ENCODE measurements at regions of chr21 and their contacts with region 1.

Region 1: DNA sequence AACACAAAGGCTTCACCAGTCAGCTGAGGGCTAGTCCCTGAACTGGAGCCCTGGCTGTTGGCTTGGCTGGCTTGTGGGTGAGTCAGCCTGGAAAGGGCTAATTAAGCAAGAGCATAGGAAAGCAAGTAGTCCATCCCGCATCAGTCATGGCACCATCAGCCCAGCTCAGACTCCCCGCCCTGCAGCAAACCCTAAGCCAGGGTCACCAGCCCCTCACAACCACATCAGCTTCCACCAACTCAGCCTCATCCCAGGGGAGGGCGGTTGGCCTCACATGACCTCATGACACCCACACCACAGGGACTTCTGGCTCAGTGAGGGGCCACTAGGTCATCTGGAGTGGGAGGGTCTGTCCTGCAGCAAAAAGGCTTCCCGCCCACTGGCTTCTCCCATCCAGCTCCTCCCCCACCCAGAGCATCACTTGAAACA is 7.0 kb upstream of the SPATC1L start:
- DNase-seq: peak; percentile 26
- H3K4me3 ChIP-seq: no peak overlapping the region
- CTCF ChIP-seq: no peak

Region 2: DNA sequence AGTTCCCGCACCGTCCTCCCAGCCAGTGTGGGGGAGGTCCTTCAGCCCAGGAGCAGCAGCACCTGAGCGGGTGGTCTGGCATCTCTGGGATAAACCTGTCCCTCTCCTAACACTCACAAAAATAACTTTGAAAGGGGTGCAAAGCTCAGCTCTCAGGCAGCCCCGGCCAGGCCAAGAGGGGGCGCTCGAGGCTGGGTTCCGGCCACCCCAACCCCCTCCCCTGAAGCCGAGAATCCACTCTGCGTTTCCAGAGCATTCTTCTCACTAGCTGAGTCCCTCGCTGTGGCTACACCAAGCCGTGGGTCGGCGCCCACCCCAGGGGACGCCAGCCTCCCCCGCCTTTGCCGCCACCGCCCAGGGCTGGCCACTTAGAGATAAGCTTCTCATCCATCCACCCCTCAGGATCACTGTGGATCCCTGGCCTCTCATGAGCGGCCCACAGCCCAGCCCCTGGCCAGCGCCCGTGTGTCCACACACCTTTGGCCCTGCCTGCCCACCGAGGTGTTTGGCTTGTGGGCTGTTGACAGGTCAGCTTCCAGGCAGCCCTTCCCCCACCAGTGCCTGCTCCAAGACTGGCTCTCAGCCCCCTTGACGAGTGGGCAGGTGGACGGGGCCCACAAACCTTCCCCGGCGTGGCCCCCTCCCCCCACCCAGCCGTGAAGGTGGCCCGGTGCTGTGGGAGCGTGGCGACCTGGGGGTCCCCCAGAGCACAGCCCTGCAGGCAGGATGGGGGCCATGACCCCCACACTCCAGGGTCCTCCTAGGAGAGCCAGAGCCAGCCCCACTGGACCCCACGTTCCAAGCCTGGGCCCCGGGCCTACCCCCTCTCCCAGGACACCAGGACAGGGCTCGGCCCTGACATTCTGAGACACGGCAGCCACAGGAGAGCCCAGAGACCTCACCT is 37.8 kb before region 1 on chr21:
- CTCF ChIA-PET with region 1: interaction called, 10 read pairs
- POLR2A ChIA-PET with region 1: no interaction called
- DNase-seq: no peak
- H3K4me3 ChIP-seq: no peak overlapping the region
- CTCF ChIP-seq: peak; percentile 84

Region 3: GRCh38 chr21:46172863-46173528 is 18.3 kb before region 1 on chr21:
- CTCF ChIA-PET with region 1: no interaction called
- POLR2A ChIA-PET with region 1: no interaction called
- DNase-seq: no peak
- H3K4me3 ChIP-seq: no peak overlapping the region
- CTCF ChIP-seq: no peak